Activated T-helper 2 cell treated with anti-CD3 and anti-CD28 coated beads, Interferon-gamma antibody, Interleukin-2, Interleukin-4, amounts not matched to agents 10 μg/mL and 5 μg/mL and 100 μg/mL, durations not matched to agents 14 hours and 24 hours and 36 hours (primary cell): ENCODE measurements at regions of chr4 and their contacts with region 1.

Region 1: GRCh38 chr4:184792950-184793555 is 32.7 kb downstream of the ACSL1 start:
- DNase-seq: no peak
- H3K4me3 Mint-ChIP-seq: no peak overlapping the region
- H3K27ac Mint-ChIP-seq: peak overlapping the region; percentile 34
- H3K4me1 Mint-ChIP-seq: peaks cover 44% of the 10 kb centered on the region
- H3K27me3 Mint-ChIP-seq: no peaks in the 10 kb centered on the region

Region 2: DNA sequence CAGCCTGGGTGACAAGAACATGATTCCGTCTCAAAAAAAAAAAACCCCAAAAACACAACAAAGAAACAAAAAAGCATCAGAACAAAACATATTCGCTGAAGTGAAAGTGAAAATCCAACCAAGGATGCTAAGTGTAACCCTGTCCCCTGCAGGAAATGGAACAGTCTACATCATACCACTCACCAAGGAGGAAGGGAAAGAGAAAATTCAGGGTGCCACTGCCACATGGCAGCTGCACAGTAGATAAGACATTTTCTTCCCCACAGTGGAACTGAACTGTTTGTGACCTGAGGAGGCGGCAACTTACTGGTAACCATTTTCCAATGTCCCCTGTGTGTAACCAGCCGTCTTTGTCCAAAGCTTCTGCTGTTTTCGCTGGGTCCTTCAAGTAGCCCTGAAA is 31.0 kb before region 1 on chr4:
- intact Hi-C with region 1: loop called (anchors 1 kb)
- DNase-seq: peak; percentile 61
- H3K4me3 Mint-ChIP-seq: peak overlapping the region; percentile 1
- H3K27ac Mint-ChIP-seq: peak overlapping the region; percentile 75
- H3K4me1 Mint-ChIP-seq: peaks cover 19% of the 10 kb centered on the region
- H3K27me3 Mint-ChIP-seq: no peaks in the 10 kb centered on the region

Region 3: GRCh38 chr4:185282968-185283367 is 489.9 kb after region 1 on chr4:
- intact Hi-C with region 1: no loop called
- DNase-seq: no peak
- H3K4me3 Mint-ChIP-seq: no peak overlapping the region
- H3K27ac Mint-ChIP-seq: no peak overlapping the region
- H3K4me1 Mint-ChIP-seq: peaks cover 30% of the 10 kb centered on the region
- H3K27me3 Mint-ChIP-seq: no peaks in the 10 kb centered on the region